ENCODE measurements at regions of chr10 and their contacts with region 1.

Region 1: GRCh38 chr10:91632671-91633550 is at the start of gene PPP1R3C:
- DNase-seq: peak; percentile 75 to 83 (median 82)
- ATAC-seq: peak; percentile 94
- H3K4me3 ChIP-seq: no peak within 1 kb of the TSS
- H3K4me1 ChIP-seq: peaks cover 4% of the 10 kb centered on the region
- CTCF ChIP-seq: no peak
- total RNA-seq, gene PPP1R3C: 1.5 to 23.3 (median 4.7) TPM

Region 2: DNA sequence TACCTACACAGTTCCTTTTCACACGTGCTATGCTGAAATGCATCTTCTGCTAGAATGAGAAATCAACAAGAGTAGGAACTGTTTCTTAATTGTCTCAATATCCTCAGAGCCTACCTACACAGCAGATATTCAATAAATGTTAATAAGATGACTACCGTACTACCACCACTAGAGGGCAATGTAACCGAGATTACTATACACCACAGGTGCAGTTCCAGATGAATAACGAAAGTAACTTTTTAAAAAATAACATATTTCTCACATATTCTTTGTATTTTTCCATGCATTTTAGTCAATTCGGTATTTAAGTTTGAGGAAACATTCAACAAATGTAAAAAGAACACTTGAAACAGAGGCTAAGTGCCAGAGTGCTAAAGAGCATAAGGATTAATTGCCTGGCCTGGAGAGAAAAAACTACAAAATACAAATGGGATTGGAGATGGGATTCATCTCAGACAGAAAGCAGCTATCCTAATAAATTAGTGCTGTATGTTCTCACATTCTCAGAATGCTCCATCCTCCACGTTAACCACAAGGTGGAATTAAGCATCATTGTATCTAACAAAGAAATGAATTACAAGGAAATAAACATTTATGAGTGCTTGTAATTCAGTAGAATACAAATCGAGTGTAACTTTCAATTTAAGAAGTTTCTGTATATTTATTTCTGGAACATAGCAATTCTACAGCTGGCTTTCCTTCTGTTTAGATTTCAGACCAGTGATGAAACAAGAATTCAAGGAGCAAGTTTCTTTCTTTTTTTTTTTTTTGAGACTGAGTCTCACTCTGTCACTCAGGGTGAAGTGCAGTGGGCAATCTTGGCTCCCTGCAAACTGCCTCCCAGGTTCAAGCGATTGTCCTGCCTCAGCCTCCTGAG is 243.0 kb before region 1 on chr10:
- intact Hi-C with region 1: loop called in 1 of 2 experiments (anchors 10 kb)
- DNase-seq: peak in 1 of 3 donors; percentile 51
- ATAC-seq: peak; percentile 89
- H3K4me3 ChIP-seq: no peak overlapping the region
- H3K4me1 ChIP-seq: peaks cover 5% of the 10 kb centered on the region
- CTCF ChIP-seq: no peak

Region 3: DNA sequence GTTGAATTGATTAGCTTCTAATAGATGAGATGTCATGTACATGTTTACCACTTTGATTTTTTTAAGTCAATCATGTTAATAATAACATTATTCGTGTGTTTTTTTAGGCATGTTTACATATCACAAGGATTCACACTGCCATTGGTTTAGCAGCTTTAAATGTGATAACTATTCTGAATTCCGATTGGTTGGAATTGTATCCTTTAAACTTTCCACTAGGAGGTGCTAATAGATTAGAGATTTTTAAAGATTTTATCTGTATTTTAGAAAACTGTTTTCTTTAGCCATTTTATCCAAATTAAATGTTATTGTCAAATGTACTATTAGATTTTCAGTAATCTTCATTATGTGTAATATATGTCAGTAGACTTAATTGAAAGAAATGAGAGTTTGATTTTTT is 139.6 kb before region 1 on chr10:
- intact Hi-C with region 1: loop called (anchors 5 kb)
- DNase-seq: no peak
- ATAC-seq: no peak
- H3K4me3 ChIP-seq: no peak overlapping the region
- H3K4me1 ChIP-seq: no peaks in the 10 kb centered on the region
- CTCF ChIP-seq: no peak

Region 4: GRCh38 chr10:91551856-91552255 is 81.1 kb before region 1 on chr10:
- intact Hi-C with region 1: loop called in 1 of 2 experiments (anchors 5 kb)
- DNase-seq: peak in 1 of 3 donors; percentile 42
- ATAC-seq: peak; percentile 40
- H3K4me3 ChIP-seq: no peak overlapping the region
- H3K4me1 ChIP-seq: peaks cover 11% of the 10 kb centered on the region
- CTCF ChIP-seq: no peak

Measured in mucosa of descending colon (tissue), 3 donors.